ENCODE measurements at regions of chr17 and their contacts with region 1.

Region 1: DNA sequence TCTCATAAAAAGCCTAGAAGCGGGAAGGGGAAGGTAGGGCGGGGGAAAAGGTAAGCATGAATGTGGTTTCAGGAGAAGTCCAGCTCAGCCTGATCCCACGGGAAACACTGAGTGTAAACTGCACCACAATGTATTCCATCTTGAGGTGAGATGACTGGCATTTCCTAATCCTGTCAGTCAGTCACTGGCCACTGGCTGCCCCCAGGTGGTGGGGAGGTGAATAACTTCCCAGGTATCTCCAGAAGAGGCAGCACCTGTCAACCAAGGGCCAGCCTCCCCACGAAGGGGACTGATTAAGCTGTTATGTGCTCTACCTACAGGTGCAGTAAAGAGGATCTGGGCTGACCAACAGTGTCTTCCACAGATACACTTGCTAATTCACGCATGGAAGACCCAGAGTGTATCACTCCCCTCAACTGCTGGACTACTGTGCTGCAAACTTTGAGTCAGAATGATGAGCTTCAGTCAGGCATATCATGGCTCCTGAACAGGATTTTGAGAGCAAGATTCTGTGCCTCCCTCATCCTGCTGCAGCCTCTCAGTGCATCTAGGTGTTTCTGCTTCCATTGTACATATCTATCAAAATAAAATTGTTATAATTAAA is 108.5 kb upstream of the CCL2 start:
- DNase-seq: peak; percentile 73
- H3K4me3 ChIP-seq: no peak overlapping the region
- H3K27ac ChIP-seq: no peak overlapping the region
- H3K4me1 ChIP-seq: no peaks in the 10 kb centered on the region
- H3K27me3 ChIP-seq: peaks cover 24% of the 10 kb centered on the region
- CTCF ChIP-seq: peak; percentile 40 to 82 (median 61)
- EP300 ChIP-seq: no peak
- POLR2A ChIP-seq: no peak

Region 2: GRCh38 chr17:33779225-33779591 is 367.3 kb before region 1 on chr17:
- in situ Hi-C with region 1: loop called in 3 of 4 experiments (anchors 10 to 25 kb)
- intact Hi-C with region 1: no loop called
- DNase-seq: peak; percentile 30
- H3K4me3 ChIP-seq: no peak overlapping the region
- H3K27ac ChIP-seq: no peak overlapping the region
- H3K4me1 ChIP-seq: no peaks in the 10 kb centered on the region
- H3K27me3 ChIP-seq: peaks cover 7% of the 10 kb centered on the region
- CTCF ChIP-seq: peak; percentile 86 to 99 (median 97)
- EP300 ChIP-seq: no peak
- POLR2A ChIP-seq: no peak

Region 3: GRCh38 chr17:33927732-33928133 is 218.8 kb before region 1 on chr17:
- in situ Hi-C with region 1: loop called in 2 of 4 experiments (anchors 25 kb)
- intact Hi-C with region 1: no loop called
- DNase-seq: no peak
- H3K4me3 ChIP-seq: no peak overlapping the region
- H3K27ac ChIP-seq: no peak overlapping the region
- H3K4me1 ChIP-seq: no peaks in the 10 kb centered on the region
- H3K27me3 ChIP-seq: no peaks in the 10 kb centered on the region
- CTCF ChIP-seq: peak in 3 of 5 experiments; percentile 24 to 40 (median 25)
- EP300 ChIP-seq: no peak
- POLR2A ChIP-seq: no peak

Region 4: DNA sequence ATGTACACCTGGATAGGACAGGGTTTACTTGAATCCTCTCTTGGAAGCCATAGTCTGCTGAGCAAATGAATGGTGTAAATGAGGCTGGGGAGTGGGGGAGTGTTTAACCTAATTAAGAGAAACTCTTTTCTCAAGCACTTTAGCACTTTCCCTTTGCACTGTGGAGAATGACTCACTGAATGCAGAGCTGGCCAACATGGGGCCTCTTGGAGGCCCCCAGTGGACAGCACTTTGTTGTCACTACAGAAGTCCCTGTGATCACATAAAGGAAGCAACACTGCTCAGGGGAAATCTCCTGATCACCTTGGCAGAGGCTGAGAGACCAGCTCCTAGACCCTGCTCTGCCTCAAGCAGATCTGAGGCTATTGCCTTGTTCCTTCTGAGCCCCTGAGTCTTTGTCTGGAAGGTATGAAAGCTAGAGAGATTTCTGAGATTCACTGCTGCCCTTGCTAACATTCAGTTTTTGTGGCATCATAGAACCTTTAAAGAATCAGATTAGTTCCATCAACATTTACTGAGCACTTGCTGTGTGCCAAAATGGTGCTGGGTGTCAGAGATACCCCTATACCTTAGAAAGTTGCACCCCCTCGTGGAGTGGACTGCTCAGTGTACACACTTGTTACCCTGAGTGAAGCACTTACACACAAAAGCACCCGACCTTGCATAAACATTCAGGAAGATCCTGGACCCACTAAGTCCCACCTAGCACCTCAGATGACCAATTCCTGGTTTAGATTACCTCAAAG is 121.6 kb before region 1 on chr17:
- in situ Hi-C with region 1: loop called in 1 of 4 experiments (anchors 25 kb)
- intact Hi-C with region 1: no loop called
- DNase-seq: peak; percentile 23
- H3K4me3 ChIP-seq: no peak overlapping the region
- H3K27ac ChIP-seq: no peak overlapping the region
- H3K4me1 ChIP-seq: no peaks in the 10 kb centered on the region
- H3K27me3 ChIP-seq: no peaks in the 10 kb centered on the region
- CTCF ChIP-seq: peak in 1 of 5 experiments; percentile 23
- EP300 ChIP-seq: no peak
- POLR2A ChIP-seq: no peak

Measured in transverse colon (tissue), 4 donors.